ENCODE measurements at regions of chr5 and their contacts with region 1.

Region 1: GRCh38 chr5:32709781-32710549 is 1.2 kb upstream of the NPR3 start:
- DNase-seq: peak; percentile 85 to 92
- ATAC-seq: peak; percentile 79
- H3K4me3 ChIP-seq: peak overlapping the region; percentile 57 to 62
- H3K27ac ChIP-seq: peak overlapping the region; percentile 16 to 76
- H3K4me1 ChIP-seq: no peaks in the 10 kb centered on the region
- H3K27me3 ChIP-seq: no peaks in the 10 kb centered on the region

Region 2: DNA sequence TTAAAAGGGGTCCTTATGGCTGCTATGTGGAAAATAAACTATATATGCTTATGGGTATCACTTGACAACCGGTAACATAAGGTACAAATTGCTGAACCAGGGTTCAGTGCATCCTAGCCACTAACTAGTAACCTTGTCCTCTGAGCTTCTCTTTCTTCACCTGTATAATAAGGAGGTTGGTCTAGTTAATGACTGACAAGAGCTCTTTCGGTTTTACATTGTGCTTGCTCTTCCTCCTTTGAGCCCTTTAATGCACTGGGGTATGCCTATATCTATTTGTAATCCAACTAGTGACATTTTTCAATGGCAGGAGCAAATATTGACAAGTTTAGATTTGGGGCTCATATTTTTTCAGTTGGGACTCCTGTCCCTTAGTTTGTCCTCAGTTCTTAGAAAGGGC is 67.3 kb after region 1 on chr5:
- intact Hi-C with region 1: loop called in 1 of 2 experiments (anchors 5 kb)
- DNase-seq: no peak
- ATAC-seq: no peak
- H3K4me3 ChIP-seq: no peak overlapping the region
- H3K27ac ChIP-seq: peak overlapping the region in 1 of 2 donors; percentile 48
- H3K4me1 ChIP-seq: peaks cover 3 to 8% of the 10 kb centered on the region in 2 donors
- H3K27me3 ChIP-seq: no peaks in the 10 kb centered on the region

Region 3: DNA sequence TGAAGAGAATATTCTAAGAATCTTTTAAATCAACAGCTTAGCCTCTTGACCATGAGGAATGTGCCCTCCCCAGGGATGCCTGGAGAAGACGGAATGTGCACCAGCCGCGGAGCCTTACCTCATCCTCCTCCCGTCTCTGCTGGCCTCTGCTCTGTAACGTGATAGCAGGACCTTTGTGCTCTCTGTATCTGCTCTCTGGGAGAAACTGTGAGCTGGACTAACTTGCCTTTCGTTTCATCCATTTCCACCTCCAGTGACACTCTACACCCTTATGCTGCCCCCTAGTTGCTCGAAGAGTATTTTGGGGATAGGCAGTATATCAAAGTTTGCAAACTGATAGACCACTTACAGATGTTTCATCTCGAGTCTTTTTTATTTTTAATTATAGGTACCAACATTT is 142.6 kb after region 1 on chr5:
- intact Hi-C with region 1: loop called (anchors 5 kb)
- DNase-seq: peak; percentile 61 to 83
- ATAC-seq: peak; percentile 70
- H3K4me3 ChIP-seq: no peak overlapping the region
- H3K27ac ChIP-seq: peak overlapping the region in 1 of 2 donors; percentile 28
- H3K4me1 ChIP-seq: peaks cover 0 to 1% of the 10 kb centered on the region in 2 donors
- H3K27me3 ChIP-seq: no peaks in the 10 kb centered on the region

Region 4: DNA sequence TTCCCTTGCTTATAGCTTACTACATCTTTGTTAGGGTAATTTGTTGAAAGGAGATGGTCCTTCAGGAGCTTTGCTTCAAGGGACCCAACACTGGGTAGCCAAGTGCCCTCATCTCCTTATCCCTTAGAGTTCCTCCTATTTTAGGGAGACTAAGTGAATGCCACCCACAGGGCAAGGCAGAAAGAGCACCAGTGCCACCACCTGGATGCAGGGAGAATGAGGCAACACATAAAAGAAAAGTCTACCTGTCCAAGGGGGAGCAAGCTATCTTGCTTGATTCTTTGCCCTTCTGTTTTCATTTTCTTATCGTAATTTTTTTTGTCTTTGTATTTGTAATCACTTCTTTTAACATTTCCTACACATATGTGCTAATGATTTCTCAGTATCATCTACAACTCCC is 206.7 kb after region 1 on chr5:
- intact Hi-C with region 1: loop called (anchors 2 to 5 kb)
- DNase-seq: no peak
- ATAC-seq: no peak
- H3K4me3 ChIP-seq: no peak overlapping the region
- H3K27ac ChIP-seq: no peak overlapping the region
- H3K4me1 ChIP-seq: no peaks in the 10 kb centered on the region
- H3K27me3 ChIP-seq: no peaks in the 10 kb centered on the region

Region 5: GRCh38 chr5:32975656-32976375 is 265.9 kb after region 1 on chr5:
- intact Hi-C with region 1: no loop called
- DNase-seq: no peak
- ATAC-seq: no peak
- H3K4me3 ChIP-seq: no peak overlapping the region
- H3K27ac ChIP-seq: no peak overlapping the region
- H3K4me1 ChIP-seq: no peaks in the 10 kb centered on the region
- H3K27me3 ChIP-seq: no peaks in the 10 kb centered on the region

Region 6: GRCh38 chr5:33180900-33181299 is 470.9 kb after region 1 on chr5:
- intact Hi-C with region 1: loop called (anchors 5 to 10 kb)
- DNase-seq: no peak
- ATAC-seq: no peak
- H3K4me3 ChIP-seq: no peak overlapping the region
- H3K27ac ChIP-seq: no peak overlapping the region
- H3K4me1 ChIP-seq: no peaks in the 10 kb centered on the region
- H3K27me3 ChIP-seq: no peaks in the 10 kb centered on the region

Region 7: DNA sequence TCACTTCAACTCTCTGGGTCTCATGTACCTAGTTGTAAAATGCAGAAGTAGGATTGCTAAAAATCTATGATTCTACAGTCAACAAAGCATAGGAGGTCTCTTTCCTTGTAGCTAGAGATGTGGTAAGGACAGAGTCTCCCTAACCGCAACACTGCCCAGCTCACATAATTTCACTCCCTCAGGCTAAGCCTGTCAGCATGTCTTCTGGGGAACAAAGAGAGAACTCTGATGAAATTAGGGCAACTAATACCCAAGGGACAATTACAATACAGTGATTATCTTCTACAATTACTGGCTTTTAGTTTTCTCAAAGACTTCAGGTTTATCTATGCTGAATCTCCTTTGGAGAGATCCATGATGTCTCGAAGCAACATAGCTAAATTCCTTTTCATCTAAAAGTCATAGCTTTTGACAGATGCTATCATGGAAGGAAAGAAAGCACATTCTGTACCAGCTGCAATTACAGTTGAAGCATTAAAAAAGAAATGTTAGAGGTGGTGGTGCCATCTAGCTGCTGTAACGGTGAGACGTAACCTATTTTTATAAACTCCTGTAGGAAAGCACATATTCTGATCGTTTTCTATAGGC is 589.8 kb after region 1 on chr5:
- intact Hi-C with region 1: loop called (anchors 5 to 10 kb)
- DNase-seq: no peak
- ATAC-seq: peak; percentile 74
- H3K4me3 ChIP-seq: no peak overlapping the region
- H3K27ac ChIP-seq: no peak overlapping the region
- H3K4me1 ChIP-seq: no peaks in the 10 kb centered on the region
- H3K27me3 ChIP-seq: no peaks in the 10 kb centered on the region

Region 8: DNA sequence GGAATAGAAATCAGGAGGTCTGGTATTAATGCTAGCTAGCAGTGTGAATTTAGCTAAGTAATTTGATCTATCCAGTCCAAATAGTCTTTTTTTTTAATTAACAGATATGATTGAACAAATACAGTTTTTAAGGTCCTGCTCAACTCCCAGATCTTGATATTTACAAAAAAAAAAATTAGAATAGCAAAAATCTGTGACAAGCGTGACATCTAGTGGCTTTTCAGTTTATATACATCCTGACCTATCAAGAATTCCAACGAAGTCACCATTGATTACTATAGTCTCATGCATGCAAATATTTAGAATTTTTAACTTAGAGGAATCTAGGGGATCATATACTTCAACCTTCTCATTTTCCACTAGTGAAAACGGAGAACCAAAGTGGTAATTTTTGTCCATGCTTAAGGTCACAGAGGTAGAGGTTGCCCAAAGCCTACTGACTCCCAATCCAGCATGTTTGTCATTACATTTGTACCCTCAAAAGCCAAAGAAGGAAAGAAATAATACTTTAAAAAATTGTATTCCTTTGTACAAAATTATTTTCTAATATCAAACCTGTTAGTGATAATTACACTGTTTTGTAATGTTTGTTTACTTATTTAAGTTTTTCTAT is 713.2 kb after region 1 on chr5:
- intact Hi-C with region 1: loop called (anchors 5 kb)
- DNase-seq: no peak
- ATAC-seq: peak; percentile 60
- H3K4me3 ChIP-seq: no peak overlapping the region
- H3K27ac ChIP-seq: no peak overlapping the region
- H3K4me1 ChIP-seq: no peaks in the 10 kb centered on the region
- H3K27me3 ChIP-seq: no peaks in the 10 kb centered on the region